Mammary epithelial cell (primary cell): ENCODE measurements at regions of chr15 and their contacts with region 1.

Region 1: GRCh38 chr15:73464602-73465001 is 21.6 kb downstream of the REC114 start:
- DNase-seq: no peak
- H3K4me3 ChIP-seq: no peak overlapping the region
- H3K27ac ChIP-seq: no peak overlapping the region
- H3K4me1 ChIP-seq: no peaks in the 10 kb centered on the region
- H3K27me3 ChIP-seq: no peaks in the 10 kb centered on the region
- CTCF ChIP-seq: peak; percentile 26 to 39

Region 2: DNA sequence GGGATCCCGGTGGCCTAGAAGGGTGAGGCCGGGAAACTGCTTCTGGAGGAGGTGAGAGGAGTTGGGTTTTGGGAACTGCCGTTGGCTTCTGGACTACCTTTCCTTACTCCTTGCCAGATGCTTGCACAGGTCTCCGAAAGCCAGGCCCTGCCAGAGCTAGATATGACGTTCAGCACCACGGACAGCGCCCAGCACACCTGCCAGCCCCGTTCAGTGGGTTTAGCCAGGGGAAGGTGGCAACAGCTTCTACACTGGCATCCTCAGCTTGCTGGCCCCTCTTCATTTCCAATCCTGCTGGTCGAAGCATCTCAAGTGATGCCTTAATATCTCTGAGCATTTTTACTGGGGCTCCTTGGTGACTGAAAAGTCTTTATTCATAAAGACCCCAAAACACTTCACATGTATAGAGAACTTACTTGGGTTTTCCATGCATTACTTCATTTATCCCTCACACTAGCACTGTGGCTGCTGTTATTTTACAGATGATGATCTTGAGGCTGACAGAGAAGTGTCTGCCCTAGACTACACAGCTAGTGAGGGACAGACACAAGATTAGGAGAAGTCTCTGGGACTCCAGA is 117.8 kb before region 1 on chr15:
- CTCF ChIA-PET with region 1: no interaction called
- dilution Hi-C with region 1: loop called (anchors 25 kb)
- in situ Hi-C with region 1: no loop called
- intact Hi-C with region 1: no loop called
- DNase-seq: peak; percentile 47
- H3K4me3 ChIP-seq: no peak overlapping the region
- H3K27ac ChIP-seq: no peak overlapping the region
- H3K4me1 ChIP-seq: no peaks in the 10 kb centered on the region
- H3K27me3 ChIP-seq: no peaks in the 10 kb centered on the region
- CTCF ChIP-seq: no peak

Region 3: DNA sequence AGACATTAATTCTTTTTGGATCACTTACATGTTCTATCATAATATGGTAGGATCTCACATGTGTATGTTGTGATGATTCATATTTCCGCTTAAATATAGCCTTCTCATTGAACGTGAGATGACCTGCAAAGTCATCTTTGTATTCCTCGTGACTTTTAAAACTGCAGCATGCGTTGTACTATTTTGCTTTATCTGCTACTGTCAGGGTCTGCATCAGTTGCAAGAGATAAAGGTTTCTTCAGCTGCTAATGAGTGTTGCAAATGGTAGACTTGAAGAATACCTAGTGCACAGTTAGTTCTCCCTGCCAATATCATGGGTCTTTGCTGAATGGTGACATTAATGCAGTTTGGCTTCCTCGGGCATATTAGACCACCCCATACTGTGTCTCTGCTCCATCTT is 10.2 kb after region 1 on chr15:
- CTCF ChIA-PET with region 1: no interaction called
- dilution Hi-C with region 1: no loop called
- in situ Hi-C with region 1: no loop called
- intact Hi-C with region 1: no loop called
- DNase-seq: no peak
- H3K4me3 ChIP-seq: no peak overlapping the region
- H3K27ac ChIP-seq: no peak overlapping the region
- H3K4me1 ChIP-seq: no peaks in the 10 kb centered on the region
- H3K27me3 ChIP-seq: no peaks in the 10 kb centered on the region
- CTCF ChIP-seq: no peak

Region 4: DNA sequence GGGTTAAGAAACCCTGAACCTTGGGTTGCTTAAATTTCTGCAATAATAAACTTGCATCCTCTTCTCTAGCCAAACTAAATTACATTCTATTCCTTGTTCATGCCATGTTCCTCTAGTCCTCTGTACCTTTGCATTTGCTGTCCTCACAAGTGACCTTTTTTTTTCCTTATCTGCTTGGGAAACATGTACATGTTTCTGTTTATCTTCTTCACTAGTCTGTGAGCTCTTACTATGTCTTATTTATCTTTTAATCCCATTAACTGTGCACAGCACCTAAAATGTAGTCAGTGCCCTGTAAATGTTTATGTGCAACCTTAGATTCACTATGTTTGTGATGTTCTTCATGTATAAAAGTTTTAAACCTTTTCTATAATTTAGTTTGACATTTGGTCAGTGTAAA is 40.3 kb after region 1 on chr15:
- CTCF ChIA-PET with region 1: no interaction called
- dilution Hi-C with region 1: no loop called
- in situ Hi-C with region 1: no loop called
- intact Hi-C with region 1: no loop called
- DNase-seq: no peak
- H3K4me3 ChIP-seq: no peak overlapping the region
- H3K27ac ChIP-seq: no peak overlapping the region
- H3K4me1 ChIP-seq: no peaks in the 10 kb centered on the region
- H3K27me3 ChIP-seq: peaks cover 2% of the 10 kb centered on the region
- CTCF ChIP-seq: no peak

Region 5: DNA sequence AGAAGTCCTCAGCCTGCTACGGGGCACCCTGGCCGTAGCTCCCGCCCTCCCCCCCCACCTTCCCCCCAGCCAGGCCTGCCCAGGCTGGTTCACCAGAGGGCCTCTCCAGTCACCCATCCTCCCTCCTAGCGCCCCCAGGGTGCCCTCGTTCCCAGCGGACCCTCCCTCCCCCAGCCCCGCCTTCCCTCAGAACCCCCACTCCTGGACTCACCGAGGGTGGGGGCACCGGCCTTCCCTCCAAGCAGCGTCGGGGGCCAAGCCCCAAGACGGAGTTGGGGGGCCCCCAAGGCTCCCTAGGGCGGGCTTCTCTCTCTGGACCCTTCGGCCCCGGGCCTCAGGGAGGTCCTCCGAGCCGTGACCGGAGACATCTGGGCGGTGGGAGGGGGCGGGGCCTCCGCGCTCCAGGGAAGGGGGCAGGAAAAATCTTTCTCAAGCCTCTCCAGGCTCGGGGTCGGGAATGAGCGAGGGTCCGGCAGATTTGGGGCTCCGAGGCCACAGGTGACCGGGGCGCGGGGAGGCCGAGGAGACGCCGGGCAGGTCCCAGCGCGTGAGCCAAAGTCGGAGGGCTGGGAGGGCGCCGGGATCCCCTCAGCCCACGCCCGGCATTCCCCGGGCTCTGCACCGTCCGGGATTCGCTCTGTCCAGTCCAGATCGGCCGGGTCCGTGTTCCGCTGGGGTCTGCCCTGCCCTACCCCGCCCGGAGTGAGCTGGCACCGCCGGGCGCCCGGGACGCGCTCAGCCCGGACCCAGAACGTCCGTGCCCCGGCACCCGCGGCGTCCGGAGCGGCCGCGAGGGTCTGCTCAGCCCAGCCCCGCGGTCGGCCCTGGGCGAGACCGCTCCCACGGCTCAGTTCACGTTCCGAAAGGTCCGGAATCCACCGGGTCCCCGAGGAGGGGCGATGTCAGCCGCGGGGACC is 287.6 kb after region 1 on chr15:
- CTCF ChIA-PET with region 1: no interaction called
- dilution Hi-C with region 1: no loop called
- in situ Hi-C with region 1: no loop called
- intact Hi-C with region 1: no loop called
- DNase-seq: no peak
- H3K4me3 ChIP-seq: peak overlapping the region in 2 of 3 experiments; percentile 32
- H3K27ac ChIP-seq: no peak overlapping the region
- H3K4me1 ChIP-seq: peaks cover 7% of the 10 kb centered on the region
- H3K27me3 ChIP-seq: peaks cover 27% of the 10 kb centered on the region
- CTCF ChIP-seq: no peak